Heart right ventricle (tissue), 16 donors: ENCODE measurements at regions of chr16 and their contacts with region 1.

Region 1: DNA sequence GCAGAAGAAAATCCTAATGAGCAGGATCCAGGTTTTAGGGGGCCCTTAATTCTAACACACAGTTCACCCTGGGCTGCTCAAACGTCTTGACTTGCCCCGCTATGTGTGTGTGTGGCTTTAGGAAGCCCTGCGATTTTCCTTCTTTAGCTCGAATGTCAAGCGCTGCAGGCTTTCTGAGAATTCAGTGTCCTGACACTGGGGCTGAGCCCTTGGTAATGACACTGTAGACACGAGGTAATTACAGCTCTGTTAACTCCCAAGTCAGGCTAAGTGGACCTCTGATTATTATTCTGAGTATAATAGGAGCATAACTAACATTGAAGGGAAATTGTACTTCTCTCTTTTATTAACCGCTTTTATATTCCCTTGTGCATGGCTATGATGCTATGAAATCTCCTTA is 202.1 kb downstream of the RBFOX1 start:
- DNase-seq: no peak
- ATAC-seq: no peak
- H3K4me3 ChIP-seq: no peak overlapping the region
- H3K27ac ChIP-seq: no peak overlapping the region
- H3K4me1 ChIP-seq: peaks cover 0 to 5% (median 0%) of the 10 kb centered on the region in 9 donors
- H3K27me3 ChIP-seq: no peaks in the 10 kb centered on the region
- CTCF ChIP-seq: no peak

Region 2: DNA sequence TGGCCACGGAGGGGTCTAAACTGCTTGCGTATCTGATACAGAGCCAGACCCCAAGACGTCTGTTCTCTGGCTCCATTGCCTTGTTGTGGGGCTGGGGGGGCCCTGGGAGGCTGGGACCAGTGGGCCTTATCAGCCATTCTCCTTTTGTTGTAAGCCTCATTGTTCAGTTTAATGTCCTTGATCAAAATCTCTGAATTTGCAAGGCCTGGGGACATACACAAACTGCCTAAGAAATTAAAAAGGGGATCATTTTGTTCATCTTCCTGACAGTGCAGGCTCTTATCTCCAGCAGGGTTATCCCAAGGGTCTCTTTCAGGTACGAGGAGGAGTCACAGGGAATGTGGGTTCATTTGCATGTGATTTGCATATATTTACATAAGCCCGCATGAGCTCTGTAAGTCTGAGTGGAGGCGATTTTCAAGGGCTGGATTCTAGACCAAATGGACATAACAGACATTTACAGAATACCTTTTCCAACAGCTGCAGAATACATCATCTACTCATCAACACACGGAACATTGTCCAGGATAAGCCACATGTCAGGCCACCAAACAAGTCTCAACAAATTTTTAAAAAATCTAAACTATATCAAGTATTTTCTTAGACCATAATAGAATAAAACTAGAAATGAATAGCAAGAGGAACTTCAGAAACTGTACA is 67.7 kb after region 1 on chr16:
- intact Hi-C with region 1: loop called in 1 of 10 experiments (anchors 5 kb)
- DNase-seq: no peak
- ATAC-seq: no peak
- H3K4me3 ChIP-seq: no peak overlapping the region
- H3K27ac ChIP-seq: peak overlapping the region in 5 of 10 donors; percentile 8 to 59 (median 42)
- H3K4me1 ChIP-seq: peaks cover 0 to 40% (median 7%) of the 10 kb centered on the region in 9 donors
- H3K27me3 ChIP-seq: no peaks in the 10 kb centered on the region
- CTCF ChIP-seq: no peak

Region 3: GRCh38 chr16:8251298-8251697 is 716.5 kb after region 1 on chr16:
- intact Hi-C with region 1: no loop called
- DNase-seq: no peak
- ATAC-seq: no peak
- H3K4me3 ChIP-seq: no peak overlapping the region
- H3K27ac ChIP-seq: no peak overlapping the region
- H3K4me1 ChIP-seq: no peaks in the 10 kb centered on the region
- H3K27me3 ChIP-seq: peaks cover 0 to 7% (median 0%) of the 10 kb centered on the region in 7 donors
- CTCF ChIP-seq: no peak